Endothelial cell of umbilical vein (primary cell): ENCODE measurements at regions of chr1 and their contacts with region 1.

Region 1: GRCh38 chr1:119367427-119368124 is 1.0 kb upstream of the HAO2 start:
- DNase-seq: peak; percentile 33
- H3K4me3 ChIP-seq: no peak overlapping the region
- H3K27ac ChIP-seq: no peak overlapping the region
- H3K4me1 ChIP-seq: no peaks in the 10 kb centered on the region
- H3K27me3 ChIP-seq: peaks cover 5 to 7% of the 10 kb centered on the region in 2 experiments
- CTCF ChIP-seq: peak; percentile 52 to 72
- POLR2A ChIP-seq: no peak

Region 2: DNA sequence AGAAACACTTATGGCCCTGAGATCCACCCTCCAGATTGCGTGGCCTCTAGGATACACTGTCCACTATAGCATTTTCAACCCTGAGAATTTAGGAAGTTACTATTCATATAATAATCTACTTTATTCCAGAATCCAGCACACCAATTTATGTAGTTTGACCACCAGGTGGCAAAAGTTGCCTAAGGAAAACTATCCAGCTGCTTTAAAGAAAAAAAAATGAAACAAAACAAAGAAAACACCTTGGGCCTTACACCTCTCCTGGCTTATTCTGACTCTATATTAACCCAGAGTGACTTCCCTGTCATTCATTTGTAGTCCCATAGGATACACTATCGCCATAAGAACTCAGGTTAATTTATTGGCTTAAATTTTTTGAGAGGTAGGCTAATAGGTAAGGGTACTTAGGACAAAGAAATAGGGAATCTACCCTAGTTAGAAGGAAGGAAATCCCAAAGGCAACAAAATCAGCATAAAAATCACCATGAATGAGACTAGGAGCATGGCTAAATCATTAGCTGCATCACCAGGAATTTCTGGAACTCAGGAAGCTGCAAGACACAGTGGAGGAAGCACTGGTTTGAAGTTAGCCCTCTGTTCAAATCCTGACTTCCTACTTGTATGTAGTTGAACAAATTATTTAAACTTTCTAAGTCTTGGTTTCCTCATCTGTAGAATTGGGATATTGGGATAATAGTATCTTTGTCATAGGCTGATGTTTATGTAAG is 1290.1 kb before region 1 on chr1:
- CTCF ChIA-PET with region 1: interaction called, 11 read pairs
- POLR2A ChIA-PET with region 1: no interaction called
- dilution Hi-C with region 1: no loop called
- intact Hi-C with region 1: loop called (anchors 1 kb)
- DNase-seq: peak; percentile 27
- H3K4me3 ChIP-seq: no peak overlapping the region
- H3K27ac ChIP-seq: no peak overlapping the region
- H3K4me1 ChIP-seq: no peaks in the 10 kb centered on the region
- H3K27me3 ChIP-seq: no peaks in the 10 kb centered on the region
- CTCF ChIP-seq: peak; percentile 18 to 25
- POLR2A ChIP-seq: no peak

Region 3: GRCh38 chr1:118151312-118151937 is 1216.2 kb before region 1 on chr1:
- CTCF ChIA-PET with region 1: interaction called, 8 read pairs
- POLR2A ChIA-PET with region 1: no interaction called
- dilution Hi-C with region 1: no loop called
- intact Hi-C with region 1: loop called (anchors 1 kb)
- DNase-seq: peak; percentile 65
- H3K4me3 ChIP-seq: no peak overlapping the region
- H3K27ac ChIP-seq: no peak overlapping the region
- H3K4me1 ChIP-seq: no peaks in the 10 kb centered on the region
- H3K27me3 ChIP-seq: no peaks in the 10 kb centered on the region
- CTCF ChIP-seq: peak; percentile 59 to 60
- POLR2A ChIP-seq: no peak

Region 4: GRCh38 chr1:119286587-119287181 is 80.9 kb before region 1 on chr1:
- CTCF ChIA-PET with region 1: interaction called, 7 read pairs
- POLR2A ChIA-PET with region 1: no interaction called
- dilution Hi-C with region 1: no loop called
- intact Hi-C with region 1: loop called (anchors 1 kb)
- DNase-seq: peak; percentile 28
- H3K4me3 ChIP-seq: no peak overlapping the region
- H3K27ac ChIP-seq: no peak overlapping the region
- H3K4me1 ChIP-seq: no peaks in the 10 kb centered on the region
- H3K27me3 ChIP-seq: peaks cover 4 to 11% of the 10 kb centered on the region in 2 experiments
- CTCF ChIP-seq: peak; percentile 49 to 65
- POLR2A ChIP-seq: no peak

Region 5: GRCh38 chr1:119314001-119314796 is 53.4 kb before region 1 on chr1:
- CTCF ChIA-PET with region 1: no interaction called
- POLR2A ChIA-PET with region 1: no interaction called
- dilution Hi-C with region 1: no loop called
- intact Hi-C with region 1: no loop called
- DNase-seq: no peak
- H3K4me3 ChIP-seq: no peak overlapping the region
- H3K27ac ChIP-seq: no peak overlapping the region
- H3K4me1 ChIP-seq: no peaks in the 10 kb centered on the region
- H3K27me3 ChIP-seq: peaks cover 0 to 2% of the 10 kb centered on the region in 2 experiments
- CTCF ChIP-seq: no peak
- POLR2A ChIP-seq: no peak